ENCODE measurements at regions of chr11 and their contacts with region 1.

Region 1: GRCh38 chr11:102287964-102288724 is 29.1 kb upstream of the BIRC3 start:
- DNase-seq: peak; percentile 37
- H3K4me3 ChIP-seq: peak overlapping the region in 1 of 4 donors; percentile 9
- H3K27ac ChIP-seq: peak overlapping the region; percentile 63 to 71 (median 66)
- H3K4me1 ChIP-seq: peaks cover 0 to 9% (median 2%) of the 10 kb centered on the region in 4 donors
- H3K27me3 ChIP-seq: no peaks in the 10 kb centered on the region
- CTCF ChIP-seq: peak; percentile 71 to 89 (median 79)
- EP300 ChIP-seq: no peak
- POLR2A ChIP-seq: no peak

Region 2: GRCh38 chr11:102341844-102342318 is 53.7 kb after region 1 on chr11:
- in situ Hi-C with region 1: loop called in 1 of 4 experiments (anchors 10 kb)
- intact Hi-C with region 1: loop called (anchors 1 kb)
- DNase-seq: peak; percentile 79
- H3K4me3 ChIP-seq: no peak overlapping the region
- H3K27ac ChIP-seq: no peak overlapping the region
- H3K4me1 ChIP-seq: peaks cover 5 to 15% (median 10%) of the 10 kb centered on the region in 4 donors
- H3K27me3 ChIP-seq: no peaks in the 10 kb centered on the region
- CTCF ChIP-seq: peak; percentile 76 to 83 (median 80)
- EP300 ChIP-seq: no peak
- POLR2A ChIP-seq: no peak

Region 3: GRCh38 chr11:102346748-102347461 is 58.8 kb after region 1 on chr11 and contains the start of gene BIRC2:
- in situ Hi-C with region 1: loop called in 1 of 4 experiments (anchors 10 kb)
- intact Hi-C with region 1: no loop called
- DNase-seq: peak; percentile 97
- H3K4me3 ChIP-seq: peak within 1 kb of the TSS; percentile 68 to 93 (median 74)
- H3K27ac ChIP-seq: peak within 1 kb of the TSS; percentile 98 to 100 (median 99)
- H3K4me1 ChIP-seq: peaks cover 5 to 32% (median 20%) of the 10 kb centered on the region in 4 donors
- H3K27me3 ChIP-seq: no peaks in the 10 kb centered on the region
- CTCF ChIP-seq: peak; percentile 71 to 95 (median 79)
- EP300 ChIP-seq: no peak
- POLR2A ChIP-seq: peak; percentile 89
- total RNA-seq, gene BIRC2: 66.5 to 95.9 (median 73.2) TPM

Region 4: GRCh38 chr11:102666331-102666957 is 378.3 kb after region 1 on chr11:
- in situ Hi-C with region 1: no loop called
- intact Hi-C with region 1: loop called (anchors 10 kb)
- DNase-seq: peak; percentile 18
- H3K4me3 ChIP-seq: no peak overlapping the region
- H3K27ac ChIP-seq: no peak overlapping the region
- H3K4me1 ChIP-seq: no peaks in the 10 kb centered on the region
- H3K27me3 ChIP-seq: no peaks in the 10 kb centered on the region
- CTCF ChIP-seq: peak; percentile 79 to 87 (median 81)
- EP300 ChIP-seq: no peak
- POLR2A ChIP-seq: no peak

Measured in transverse colon (tissue), 4 donors.